ENCODE measurements at regions of chr5 and their contacts with region 1.

Region 1: GRCh38 chr5:176361437-176362232 is at the start of gene KIAA1191:
- DNase-seq: peak; percentile 83 to 97
- H3K4me3 ChIP-seq: peak within 1 kb of the TSS; percentile 97 to 99
- H3K27ac ChIP-seq: peak within 1 kb of the TSS; percentile 70 to 78
- H3K4me1 ChIP-seq: peaks cover 0 to 16% of the 10 kb centered on the region in 2 donors
- H3K27me3 ChIP-seq: no peaks in the 10 kb centered on the region
- CTCF ChIP-seq: peak in 1 of 3 experiments; percentile 29
- total RNA-seq, gene KIAA1191: 56.2 TPM

Region 2: GRCh38 chr5:176379881-176380280 is 18.2 kb after region 1 on chr5:
- intact Hi-C with region 1: no loop called
- DNase-seq: no peak
- H3K4me3 ChIP-seq: no peak overlapping the region
- H3K27ac ChIP-seq: no peak overlapping the region
- H3K4me1 ChIP-seq: peaks cover 0 to 15% of the 10 kb centered on the region in 2 donors
- H3K27me3 ChIP-seq: no peaks in the 10 kb centered on the region
- CTCF ChIP-seq: no peak

Region 3: DNA sequence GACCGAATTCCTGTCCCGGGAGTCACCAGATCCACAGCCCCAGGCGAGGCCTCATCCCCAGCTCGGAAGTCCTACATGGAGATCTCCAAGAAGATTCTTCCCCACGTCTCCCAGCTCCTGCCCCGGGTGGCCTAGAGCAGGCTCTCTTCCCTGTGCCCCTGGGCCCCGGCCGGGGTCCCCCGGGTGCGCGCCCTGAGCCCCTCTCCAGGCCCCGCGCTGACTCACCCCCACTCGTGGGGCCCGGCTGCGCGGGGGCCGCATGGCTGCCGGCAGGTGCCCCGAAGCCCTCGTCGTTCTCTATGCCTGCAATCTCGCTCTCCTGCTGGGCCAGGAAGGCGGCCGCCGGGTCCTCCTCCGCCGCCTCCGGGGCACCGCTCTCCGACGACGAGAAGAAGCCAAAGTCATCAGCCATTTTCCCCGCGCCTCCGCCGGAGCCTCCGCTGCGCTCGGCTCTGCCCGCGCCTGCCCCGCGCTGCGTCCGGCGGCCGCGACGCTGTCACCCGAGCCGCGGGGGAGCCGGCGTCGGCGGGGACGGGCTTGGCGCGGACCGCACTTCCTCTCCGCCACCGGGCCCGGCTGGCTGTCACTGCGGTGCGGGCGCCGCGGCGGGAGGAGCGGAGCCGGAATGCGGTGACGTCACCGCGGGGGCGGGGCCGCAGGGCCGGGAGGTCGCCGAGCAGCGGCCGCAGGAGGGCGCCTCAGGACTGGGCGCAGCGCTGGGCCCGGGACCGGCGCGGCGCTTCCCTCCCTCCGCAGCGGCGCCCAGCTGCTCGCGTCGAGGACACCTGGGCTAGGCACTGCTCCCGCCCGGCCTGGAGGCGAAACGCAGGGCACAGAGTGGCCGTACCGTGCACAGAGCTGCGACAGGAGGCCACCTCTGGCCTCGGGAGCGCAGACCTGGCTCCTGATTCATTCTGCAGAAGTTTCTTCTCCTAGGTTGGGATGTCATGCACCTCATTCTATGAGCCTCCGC is 54.6 kb after region 1 on chr5 and contains the start of gene CLTB:
- intact Hi-C with region 1: loop called (anchors 5 kb)
- DNase-seq: peak; percentile 49 to 94
- H3K4me3 ChIP-seq: peak within 1 kb of the TSS; percentile 64 to 71
- H3K27ac ChIP-seq: peak within 1 kb of the TSS; percentile 80 to 92
- H3K4me1 ChIP-seq: peaks cover 0 to 32% of the 10 kb centered on the region in 2 donors
- H3K27me3 ChIP-seq: no peaks in the 10 kb centered on the region
- CTCF ChIP-seq: peak; percentile 23 to 97 (median 54)
- total RNA-seq, gene CLTB: 189 TPM

Region 4: DNA sequence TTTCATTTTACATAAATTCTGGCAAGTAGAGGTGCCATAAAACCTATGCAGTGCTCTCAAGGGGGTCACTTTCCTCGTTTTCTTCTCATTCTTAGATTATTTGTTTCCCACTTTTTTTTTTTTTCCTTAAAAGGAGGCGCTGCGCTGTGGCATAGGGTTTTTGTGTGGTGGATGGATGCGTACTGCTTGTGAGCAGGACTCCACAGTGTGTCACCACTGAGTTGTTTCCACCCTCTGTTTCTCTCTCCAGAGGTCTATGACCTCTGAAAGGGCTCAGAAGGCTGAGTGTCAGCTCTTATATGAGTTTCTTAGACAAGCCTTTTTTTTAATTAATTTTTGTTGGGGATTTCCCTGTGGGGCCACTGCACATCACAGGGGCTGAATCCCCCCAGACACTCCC is 68.3 kb after region 1 on chr5:
- intact Hi-C with region 1: no loop called
- DNase-seq: no peak
- H3K4me3 ChIP-seq: no peak overlapping the region
- H3K27ac ChIP-seq: no peak overlapping the region
- H3K4me1 ChIP-seq: peaks cover 0 to 4% of the 10 kb centered on the region in 2 donors
- H3K27me3 ChIP-seq: no peaks in the 10 kb centered on the region
- CTCF ChIP-seq: no peak

Region 5: DNA sequence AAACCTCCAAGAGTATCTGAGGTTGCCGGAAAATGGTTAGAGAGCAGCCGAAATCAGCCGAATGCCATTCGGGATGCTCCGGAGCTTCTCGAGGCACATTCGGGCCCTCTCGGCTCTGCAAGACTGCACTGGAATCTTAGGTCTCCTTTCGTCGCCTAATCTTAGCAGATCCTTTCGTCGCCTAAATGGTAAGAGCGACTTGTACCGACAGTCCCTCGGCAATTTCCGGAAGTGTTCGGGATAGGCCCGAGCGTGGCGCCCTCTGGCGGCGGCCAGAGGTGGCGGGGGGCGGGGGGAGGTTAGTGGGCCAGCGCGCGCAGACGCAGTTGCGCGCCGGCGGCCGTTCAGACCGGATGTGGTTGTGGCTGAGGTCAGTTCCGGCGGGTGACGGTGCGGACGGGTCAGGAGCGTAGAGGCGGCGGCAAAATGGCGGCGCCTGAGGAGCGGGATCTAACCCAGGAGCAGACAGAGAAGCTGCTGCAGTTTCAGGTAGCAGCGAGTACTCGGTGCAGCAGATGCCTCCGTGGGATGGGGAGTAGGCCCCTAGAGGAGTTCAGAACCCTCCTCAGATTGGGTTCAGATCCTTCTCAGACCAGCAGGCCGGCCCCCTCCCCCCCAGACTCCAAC is 86.5 kb after region 1 on chr5 and contains the start of gene FAF2:
- intact Hi-C with region 1: loop called (anchors 1 kb)
- DNase-seq: peak; percentile 87 to 98
- H3K4me3 ChIP-seq: peak within 1 kb of the TSS; percentile 88 to 94
- H3K27ac ChIP-seq: peak within 1 kb of the TSS; percentile 91 to 92
- H3K4me1 ChIP-seq: peaks cover 6 to 17% of the 10 kb centered on the region in 2 donors
- H3K27me3 ChIP-seq: no peaks in the 10 kb centered on the region
- CTCF ChIP-seq: peak; percentile 97 to 98 (median 97)
- total RNA-seq, gene FAF2: 18.7 TPM

Region 6: GRCh38 chr5:176543428-176544173 is 182.0 kb after region 1 on chr5:
- intact Hi-C with region 1: loop called (anchors 5 kb)
- DNase-seq: peak in 1 of 2 donors; percentile 80
- H3K4me3 ChIP-seq: peak overlapping the region; percentile 82 to 85
- H3K27ac ChIP-seq: peak overlapping the region; percentile 2 to 40
- H3K4me1 ChIP-seq: peaks cover 0 to 9% of the 10 kb centered on the region in 2 donors
- H3K27me3 ChIP-seq: no peaks in the 10 kb centered on the region
- CTCF ChIP-seq: no peak

Region 7: DNA sequence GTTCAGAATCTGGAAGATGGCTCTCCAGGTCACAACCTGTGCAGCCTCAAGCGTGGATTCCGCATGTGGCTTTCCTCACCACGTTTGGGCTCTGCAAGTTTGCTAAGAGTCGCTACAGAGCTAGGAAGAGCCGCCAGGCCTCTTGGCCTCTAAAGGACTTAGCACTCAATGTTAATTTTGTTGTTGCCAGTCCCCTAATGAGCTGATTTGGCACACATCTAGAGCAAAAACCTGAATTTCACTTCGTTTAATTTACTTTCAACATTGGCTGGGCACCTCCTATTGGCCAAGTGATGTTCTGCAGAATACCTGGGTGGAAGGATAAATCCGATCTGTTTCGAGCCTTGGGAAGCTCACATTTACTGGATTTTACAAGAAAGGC is 382.9 kb after region 1 on chr5:
- intact Hi-C with region 1: no loop called
- DNase-seq: peak in 1 of 2 donors; percentile 9
- H3K4me3 ChIP-seq: no peak overlapping the region
- H3K27ac ChIP-seq: no peak overlapping the region
- H3K4me1 ChIP-seq: no peaks in the 10 kb centered on the region
- H3K27me3 ChIP-seq: peaks cover 3% of the 10 kb centered on the region
- CTCF ChIP-seq: no peak

Region 8: GRCh38 chr5:177232761-177233160 is 871.1 kb after region 1 on chr5:
- intact Hi-C with region 1: no loop called
- DNase-seq: no peak
- H3K4me3 ChIP-seq: no peak overlapping the region
- H3K27ac ChIP-seq: no peak overlapping the region
- H3K4me1 ChIP-seq: peaks cover 0 to 13% of the 10 kb centered on the region in 2 donors
- H3K27me3 ChIP-seq: no peaks in the 10 kb centered on the region
- CTCF ChIP-seq: no peak